Activated naive CD8-positive, alpha-beta T cell treated with anti-CD3 and anti-CD28 coated beads, Interleukin-2, amount 10 ng/mL, durations not matched to agents 7 days and 5 days (primary cell): ENCODE measurements at regions of chr10 and their contacts with region 1.

Region 1: GRCh38 chr10:32980558-32981468 is 22.8 kb upstream of the ITGB1 start:
- DNase-seq: peak; percentile 77
- ATAC-seq: peak; percentile 99
- H3K4me3 Mint-ChIP-seq: peak overlapping the region; percentile 95
- H3K27ac Mint-ChIP-seq: peak overlapping the region; percentile 95
- H3K4me1 Mint-ChIP-seq: peaks cover 21% of the 10 kb centered on the region
- H3K27me3 Mint-ChIP-seq: no peaks in the 10 kb centered on the region

Region 2: DNA sequence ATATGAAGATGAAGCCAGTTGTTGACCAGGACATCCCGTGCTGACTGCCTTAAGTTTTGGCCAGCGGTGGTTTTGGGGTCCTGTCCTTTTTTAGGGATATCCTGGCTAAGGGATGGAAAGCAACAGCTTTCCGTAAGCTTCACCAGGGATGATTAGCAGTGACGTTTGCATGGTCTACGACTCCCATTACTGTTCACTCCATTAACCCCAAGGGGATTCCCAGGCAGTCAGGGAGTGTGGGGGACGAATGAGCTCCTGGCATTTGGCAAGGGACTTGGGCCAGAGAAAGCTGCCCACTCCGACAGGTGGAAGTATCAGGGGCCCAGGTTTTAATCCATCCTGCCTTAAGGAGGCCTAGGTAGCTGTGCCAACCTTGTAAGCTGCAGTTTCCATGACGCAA is 89.6 kb before region 1 on chr10:
- POLR2A ChIA-PET with region 1: no interaction called
- DNase-seq: no peak
- ATAC-seq: no peak
- H3K4me3 Mint-ChIP-seq: no peak overlapping the region
- H3K27ac Mint-ChIP-seq: no peak overlapping the region
- H3K4me1 Mint-ChIP-seq: no peaks in the 10 kb centered on the region
- H3K27me3 Mint-ChIP-seq: no peaks in the 10 kb centered on the region

Region 3: DNA sequence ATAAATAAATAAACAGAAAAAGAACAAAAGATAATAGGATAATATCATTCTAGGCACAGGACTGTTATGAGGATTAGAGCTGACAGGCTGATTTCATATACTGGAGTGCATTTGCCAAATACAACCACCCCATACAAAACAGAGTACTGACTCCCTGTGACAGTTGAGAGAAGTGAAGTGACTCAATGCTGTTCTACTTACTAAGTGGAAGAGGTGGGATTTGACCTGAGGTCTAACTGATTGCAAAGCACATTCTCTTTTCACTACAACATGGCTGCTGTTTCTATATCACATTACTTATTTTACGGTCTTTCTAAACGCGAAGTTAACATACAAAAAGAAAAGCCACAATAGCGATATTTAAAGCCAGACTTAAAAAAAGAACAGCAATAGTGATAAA is 74.2 kb before region 1 on chr10:
- POLR2A ChIA-PET with region 1: no interaction called
- DNase-seq: no peak
- ATAC-seq: no peak
- H3K4me3 Mint-ChIP-seq: no peak overlapping the region
- H3K27ac Mint-ChIP-seq: no peak overlapping the region
- H3K4me1 Mint-ChIP-seq: no peaks in the 10 kb centered on the region
- H3K27me3 Mint-ChIP-seq: no peaks in the 10 kb centered on the region

Region 4: GRCh38 chr10:32958085-32959005 is 22.5 kb before region 1 on chr10 and contains the start of gene ITGB1:
- POLR2A ChIA-PET with region 1: interaction called, 12 read pairs
- DNase-seq: peak; percentile 91
- ATAC-seq: peak; percentile 90
- H3K4me3 Mint-ChIP-seq: peak within 1 kb of the TSS; percentile 88
- H3K27ac Mint-ChIP-seq: peak within 1 kb of the TSS; percentile 75
- H3K4me1 Mint-ChIP-seq: peaks cover 24% of the 10 kb centered on the region
- H3K27me3 Mint-ChIP-seq: no peaks in the 10 kb centered on the region
- total RNA-seq, gene ITGB1: 60.3 to 77.8 TPM

Region 5: DNA sequence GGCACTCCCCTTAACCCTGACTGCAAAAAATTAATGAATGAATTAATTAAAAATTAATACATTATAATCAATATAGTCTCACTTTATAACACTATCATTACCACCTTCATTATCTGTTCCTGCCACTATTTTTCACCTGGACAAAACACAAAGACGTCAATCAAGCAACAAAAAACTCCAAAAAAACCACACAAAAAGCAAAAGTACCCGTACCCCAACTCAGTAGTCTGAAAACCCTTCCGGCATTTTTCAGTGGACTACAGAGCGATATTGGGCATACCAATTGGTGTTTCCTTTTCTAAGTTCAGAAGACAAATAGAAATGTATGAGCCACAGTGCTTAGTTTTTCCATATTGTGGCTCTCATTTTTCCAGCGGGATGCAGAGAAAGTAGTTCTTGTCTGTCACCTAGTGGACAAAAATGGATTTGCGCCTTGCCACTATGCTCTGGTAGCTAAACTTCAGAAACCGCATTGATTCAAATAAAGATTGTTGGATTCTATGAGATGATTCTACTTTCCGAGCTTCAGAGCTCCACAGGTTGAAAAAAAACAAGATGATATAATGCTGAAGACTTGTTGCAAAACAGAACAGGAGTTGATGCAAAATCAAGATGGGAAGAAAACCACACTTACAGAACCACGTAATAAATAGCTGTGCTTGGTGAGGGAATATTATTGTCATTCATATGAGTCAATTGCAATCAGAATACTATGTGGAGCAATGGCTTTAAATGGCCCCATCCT is 27.9 kb after region 1 on chr10:
- POLR2A ChIA-PET with region 1: no interaction called
- DNase-seq: no peak
- ATAC-seq: peak; percentile 22
- H3K4me3 Mint-ChIP-seq: peak overlapping the region; percentile 73
- H3K27ac Mint-ChIP-seq: no peak overlapping the region
- H3K4me1 Mint-ChIP-seq: peaks cover 9% of the 10 kb centered on the region
- H3K27me3 Mint-ChIP-seq: peaks cover 9% of the 10 kb centered on the region